ENCODE measurements at regions of chr10 and their contacts with region 1.

Region 1: DNA sequence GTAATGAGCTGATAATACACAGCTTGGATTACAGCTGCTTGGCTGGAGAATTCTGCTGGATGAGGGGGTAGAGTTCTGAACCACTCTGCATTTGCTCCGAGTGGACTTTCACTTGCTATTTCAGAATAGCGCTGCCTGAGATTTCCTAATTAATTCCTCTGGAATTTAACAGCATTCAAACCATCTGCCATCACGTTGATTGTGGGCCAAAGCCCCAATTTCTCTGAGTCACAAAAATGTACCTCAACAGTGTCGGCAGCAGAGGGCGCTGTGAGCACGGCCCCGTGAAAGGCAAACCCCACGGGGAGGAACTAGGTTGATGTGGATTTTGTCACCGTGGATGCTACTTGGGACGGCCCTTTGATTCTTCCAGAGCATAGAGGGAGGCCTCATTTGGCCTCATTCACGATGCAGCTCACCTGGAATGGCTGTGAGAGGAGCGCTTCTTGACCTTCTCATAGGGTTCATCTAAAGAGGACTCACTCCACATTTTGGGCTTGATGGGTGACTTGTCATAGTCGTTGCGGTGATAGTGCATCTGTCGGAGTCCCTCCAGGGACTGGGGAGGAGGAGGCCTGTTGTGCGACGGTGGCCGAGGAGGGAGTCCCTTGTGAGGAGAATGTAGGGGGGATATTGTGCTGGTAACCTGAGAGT is 73.3 kb downstream of the PRPF18 start:
- DNase-seq: peak; percentile 46 to 89 (median 78)

Region 2: GRCh38 chr10:13776861-13777311 is 116.9 kb after region 1 on chr10:
- intact Hi-C with region 1: loop called (anchors 5 kb)
- DNase-seq: no peak

Measured in head of caudate nucleus (tissue), 42 donors.